Dorsolateral prefrontal cortex (tissue), 120 donors: ENCODE measurements at regions of chr9 and their contacts with region 1.

Region 1: DNA sequence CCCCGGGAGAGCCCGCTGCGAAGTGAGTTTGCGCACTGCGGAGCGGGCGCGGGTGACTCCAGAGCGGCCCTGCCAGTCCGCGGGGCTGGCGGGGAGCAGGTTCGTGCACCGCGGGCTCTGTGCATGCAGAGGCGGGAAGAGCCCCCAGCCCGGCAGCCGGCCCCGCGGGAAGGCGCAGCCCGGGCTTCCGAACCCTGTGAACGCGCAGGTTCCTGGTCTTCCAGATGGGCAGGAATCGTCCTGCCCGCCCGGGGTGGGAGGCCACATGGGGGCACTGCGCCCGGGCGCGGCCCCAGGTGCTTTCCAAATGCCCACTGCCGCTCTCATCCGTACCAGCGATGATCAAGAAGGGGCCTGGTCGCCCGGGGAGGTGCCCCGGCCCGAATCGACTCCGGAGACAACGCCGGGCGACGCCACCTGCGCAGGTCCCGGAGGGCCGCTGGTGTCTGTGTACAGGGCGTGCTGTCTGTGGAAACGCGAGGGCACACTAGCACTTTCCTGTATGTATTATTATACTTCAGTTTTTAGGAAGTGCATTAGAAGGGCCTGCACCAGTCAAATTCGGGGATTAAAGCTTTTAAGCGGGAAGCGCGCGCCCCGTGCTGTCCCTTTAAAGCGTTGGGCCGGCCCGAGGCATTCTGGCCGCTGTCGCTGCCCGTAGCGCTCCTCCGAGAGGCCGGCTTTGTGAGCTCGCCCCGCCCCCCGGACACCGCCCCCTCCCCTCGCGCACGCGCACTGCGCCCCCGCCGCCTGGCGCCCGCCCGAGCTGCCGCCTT is at the start of gene WDR5:
- DNase-seq: peak; percentile 88 to 93 (median 91)
- H3K4me3 ChIP-seq: peak within 1 kb of the TSS; percentile 74 to 100 (median 96)
- H3K27ac ChIP-seq: peak within 1 kb of the TSS; percentile 77 to 100 (median 96)
- H3K27me3 ChIP-seq: no peaks in the 10 kb centered on the region
- CTCF ChIP-seq: peak in 46 of 56 donors; percentile 4 to 62 (median 39)
- total RNA-seq, gene WDR5: 22.8 to 42.2 (median 29.5) TPM

Region 2: DNA sequence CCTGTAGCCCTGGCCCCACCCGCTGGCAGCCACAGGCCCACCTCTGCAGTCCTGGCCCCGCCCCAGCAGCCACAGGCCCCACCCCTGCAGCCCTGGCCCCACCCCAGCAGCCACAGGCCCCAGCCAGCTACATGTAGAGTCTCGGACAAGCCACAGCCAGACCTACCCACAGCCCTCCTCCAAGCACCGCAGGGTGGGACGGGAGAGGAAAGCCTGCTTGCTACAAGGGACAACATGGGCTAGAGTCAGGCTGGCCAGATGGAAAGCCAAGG is 347.8 kb before region 1 on chr9:
- intact Hi-C with region 1: loop called in 1 of 2 experiments (anchors 5 kb)
- DNase-seq: no peak
- H3K4me3 ChIP-seq: no peak overlapping the region
- H3K27ac ChIP-seq: no peak overlapping the region
- H3K27me3 ChIP-seq: no peaks in the 10 kb centered on the region
- CTCF ChIP-seq: no peak

Region 3: GRCh38 chr9:134024828-134025605 is 110.5 kb before region 1 on chr9 and contains the start of gene BRD3OS:
- intact Hi-C with region 1: loop called in 1 of 2 experiments (anchors 5 kb)
- DNase-seq: peak; percentile 85 to 97 (median 95)
- H3K4me3 ChIP-seq: peak within 1 kb of the TSS; percentile 67 to 95 (median 88)
- H3K27ac ChIP-seq: peak within 1 kb of the TSS in 55 of 59 donors; percentile 15 to 90 (median 80)
- H3K27me3 ChIP-seq: no peaks in the 10 kb centered on the region
- CTCF ChIP-seq: peak in 1 of 56 donors; percentile 11
- total RNA-seq, gene BRD3OS: 22.2 to 73.3 (median 53.2) TPM

Region 4: DNA sequence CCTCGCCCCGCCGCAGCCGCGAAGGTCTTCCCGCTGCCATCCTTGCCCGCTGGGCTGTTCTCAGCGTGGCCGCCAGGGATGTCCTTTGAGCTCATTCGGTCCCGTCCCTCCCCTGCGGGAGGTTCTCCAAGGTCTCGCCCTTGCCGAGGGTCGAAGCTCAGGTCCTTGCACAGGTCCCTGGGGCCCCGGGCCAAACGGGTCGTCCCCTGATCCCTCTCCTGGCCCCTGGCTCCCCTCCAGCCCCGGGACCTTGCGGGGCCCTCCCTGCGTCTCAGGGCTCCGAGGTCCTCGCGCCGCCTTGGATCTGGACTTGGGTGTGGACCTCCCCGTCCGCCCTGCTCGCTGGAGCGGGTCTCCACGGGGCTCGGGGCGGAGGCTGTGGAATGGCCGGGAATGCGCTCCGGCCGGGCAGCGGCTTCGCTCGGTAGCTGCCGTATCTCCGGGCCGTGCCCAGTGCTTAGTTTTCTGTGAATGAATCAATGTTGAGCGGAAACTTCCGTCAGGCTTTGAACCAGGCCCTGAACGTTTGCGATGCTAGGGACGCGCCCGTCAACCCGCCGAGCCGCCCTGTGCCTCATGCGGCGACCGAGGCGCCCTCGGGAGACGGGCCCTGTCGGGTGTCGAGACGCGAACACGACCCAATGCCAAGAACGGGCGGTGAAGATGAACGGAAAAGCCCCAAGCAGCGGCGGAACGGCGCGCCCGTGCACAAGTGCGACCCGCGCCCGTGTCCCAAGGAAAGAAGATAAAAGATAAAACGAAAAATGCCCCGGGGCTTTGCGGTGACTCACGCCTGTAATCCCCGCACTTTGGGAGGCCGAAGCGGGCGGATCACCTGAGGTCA is 28.0 kb after region 1 on chr9:
- intact Hi-C with region 1: loop called (anchors 1 kb)
- DNase-seq: peak in 9 of 10 donors; percentile 38 to 74 (median 56)
- H3K4me3 ChIP-seq: no peak overlapping the region
- H3K27ac ChIP-seq: peak overlapping the region in 3 of 59 donors; percentile 57 to 87 (median 75)
- H3K27me3 ChIP-seq: no peaks in the 10 kb centered on the region
- CTCF ChIP-seq: peak in 31 of 56 donors; percentile 7 to 49 (median 25)